ENCODE measurements at regions of chr3 and their contacts with region 1.

Region 1: DNA sequence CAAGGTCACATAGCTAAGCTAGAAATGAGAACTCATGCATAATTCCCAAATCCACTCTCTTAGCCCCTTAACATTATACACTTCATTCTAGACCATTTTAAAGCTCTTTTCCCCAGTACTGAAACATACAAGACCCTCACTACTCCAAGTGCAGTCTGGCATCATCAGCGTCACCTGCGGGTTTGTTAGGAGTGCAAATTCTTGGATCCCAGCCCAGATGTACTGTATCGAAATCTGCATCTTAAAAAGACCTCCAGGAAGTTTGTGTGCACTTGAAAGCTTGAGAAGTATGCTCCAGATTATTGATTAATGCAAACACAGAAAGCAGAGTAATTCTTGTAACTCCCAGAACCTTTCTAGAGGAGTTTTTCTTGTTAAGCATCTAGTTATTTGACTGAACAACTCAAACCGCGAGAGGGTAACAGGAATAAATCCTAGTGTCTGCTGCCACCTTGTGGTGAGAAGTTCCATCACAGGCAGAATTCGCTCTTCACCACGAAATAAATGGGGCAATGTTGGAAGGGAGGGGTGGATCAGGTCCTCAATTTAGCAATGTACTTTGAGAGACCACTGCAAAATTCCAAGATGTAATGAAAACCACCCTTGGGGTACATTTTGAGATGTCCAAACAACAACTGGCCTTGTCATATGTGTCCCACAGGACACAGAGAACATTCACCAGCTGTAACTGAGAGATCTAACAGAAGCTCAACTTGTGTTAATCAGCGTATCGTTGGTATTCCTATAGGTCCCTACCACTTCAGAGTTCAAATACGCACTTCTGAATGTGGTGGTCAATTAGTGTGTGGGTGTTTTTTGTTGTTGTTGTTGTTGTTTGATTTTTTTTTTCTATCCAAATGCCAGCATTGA is 583 bp upstream of the C3orf49 start:
- DNase-seq: peak; percentile 40 to 63
- H3K4me3 ChIP-seq: no peak overlapping the region
- H3K4me3 Mint-ChIP-seq: no peak overlapping the region
- H3K27ac Mint-ChIP-seq: no peak overlapping the region
- H3K4me1 ChIP-seq: no peaks in the 10 kb centered on the region
- H3K4me1 Mint-ChIP-seq: no peaks in the 10 kb centered on the region
- H3K27me3 ChIP-seq: no peaks in the 10 kb centered on the region
- H3K27me3 Mint-ChIP-seq: no peaks in the 10 kb centered on the region
- CTCF ChIP-seq: peak; percentile 76 to 83

Region 2: DNA sequence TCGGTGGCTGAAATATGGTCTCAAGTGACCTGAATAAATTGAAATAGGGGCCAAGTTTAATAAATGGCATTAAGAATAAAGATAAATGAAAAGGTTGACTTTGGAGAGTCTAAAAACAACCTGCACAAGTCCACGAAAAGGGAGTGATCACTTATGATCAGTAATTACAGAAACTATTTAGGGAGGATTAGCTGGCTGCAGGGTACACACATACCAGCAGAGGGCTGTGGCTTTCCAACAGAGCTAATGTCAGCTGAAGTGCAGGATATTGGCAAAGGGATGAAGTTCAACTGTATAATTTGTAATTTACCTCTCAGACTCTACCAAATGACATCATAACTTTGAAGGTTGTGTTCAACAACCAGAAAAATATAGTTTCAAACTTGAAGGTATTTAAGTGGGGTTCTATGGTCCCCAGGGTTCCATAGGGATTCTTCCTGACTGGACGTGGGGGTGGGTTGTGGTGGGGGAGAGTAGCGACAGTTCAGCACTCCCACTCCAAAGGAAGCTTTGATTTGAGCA is 453.5 kb before region 1 on chr3:
- CTCF ChIA-PET with region 1: interaction called, 3 read pairs
- POLR2A ChIA-PET with region 1: no interaction called
- intact Hi-C with region 1: loop called (anchors 1 kb)
- DNase-seq: peak in 1 of 2 experiments; percentile 17
- H3K4me3 ChIP-seq: no peak overlapping the region
- H3K4me3 Mint-ChIP-seq: no peak overlapping the region
- H3K27ac Mint-ChIP-seq: no peak overlapping the region
- H3K4me1 ChIP-seq: no peaks in the 10 kb centered on the region
- H3K4me1 Mint-ChIP-seq: no peaks in the 10 kb centered on the region
- H3K27me3 ChIP-seq: no peaks in the 10 kb centered on the region
- H3K27me3 Mint-ChIP-seq: peaks cover 7% of the 10 kb centered on the region
- CTCF ChIP-seq: peak; percentile 40 to 63

Region 3: DNA sequence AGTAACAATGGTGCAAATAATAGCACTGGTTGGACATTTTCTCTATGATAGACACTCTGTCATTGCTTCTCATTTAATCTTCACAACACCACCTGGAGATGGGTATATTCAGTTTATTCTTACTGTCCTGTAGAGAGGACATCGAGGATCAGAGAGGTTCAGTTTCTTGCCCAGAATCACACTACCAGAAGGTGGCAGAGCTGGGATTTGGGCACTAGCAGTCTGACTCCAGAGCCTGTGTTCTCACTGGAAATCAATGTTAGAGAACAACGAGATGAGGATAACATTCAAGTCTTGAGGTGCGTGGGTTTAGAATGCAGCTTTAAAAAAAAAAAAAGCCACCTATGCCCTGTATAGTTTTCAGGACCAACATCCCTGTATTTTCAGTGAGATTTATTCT is 412.6 kb before region 1 on chr3:
- CTCF ChIA-PET with region 1: no interaction called
- POLR2A ChIA-PET with region 1: no interaction called
- intact Hi-C with region 1: loop called (anchors 5 kb)
- DNase-seq: peak in 1 of 2 experiments; percentile 6
- H3K4me3 ChIP-seq: no peak overlapping the region
- H3K4me3 Mint-ChIP-seq: no peak overlapping the region
- H3K27ac Mint-ChIP-seq: no peak overlapping the region
- H3K4me1 ChIP-seq: no peaks in the 10 kb centered on the region
- H3K4me1 Mint-ChIP-seq: no peaks in the 10 kb centered on the region
- H3K27me3 ChIP-seq: no peaks in the 10 kb centered on the region; the same call in 1 of the 2 replicates
- H3K27me3 Mint-ChIP-seq: peaks cover 5% of the 10 kb centered on the region
- CTCF ChIP-seq: peak in 1 of 2 experiments; percentile 28

Region 4: GRCh38 chr3:63764511-63764910 is 54.0 kb before region 1 on chr3:
- CTCF ChIA-PET with region 1: no interaction called
- POLR2A ChIA-PET with region 1: no interaction called
- intact Hi-C with region 1: no loop called
- DNase-seq: no peak
- H3K4me3 ChIP-seq: no peak overlapping the region
- H3K4me3 Mint-ChIP-seq: no peak overlapping the region
- H3K27ac Mint-ChIP-seq: no peak overlapping the region
- H3K4me1 ChIP-seq: no peaks in the 10 kb centered on the region
- H3K4me1 Mint-ChIP-seq: no peaks in the 10 kb centered on the region
- H3K27me3 ChIP-seq: no peaks in the 10 kb centered on the region; the same call in 1 of the 2 replicates
- H3K27me3 Mint-ChIP-seq: peaks cover 6% of the 10 kb centered on the region
- CTCF ChIP-seq: no peak

Measured in Caco-2 (cell line).